ENCODE measurements at regions of chr2 and their contacts with region 1.

Region 1: DNA sequence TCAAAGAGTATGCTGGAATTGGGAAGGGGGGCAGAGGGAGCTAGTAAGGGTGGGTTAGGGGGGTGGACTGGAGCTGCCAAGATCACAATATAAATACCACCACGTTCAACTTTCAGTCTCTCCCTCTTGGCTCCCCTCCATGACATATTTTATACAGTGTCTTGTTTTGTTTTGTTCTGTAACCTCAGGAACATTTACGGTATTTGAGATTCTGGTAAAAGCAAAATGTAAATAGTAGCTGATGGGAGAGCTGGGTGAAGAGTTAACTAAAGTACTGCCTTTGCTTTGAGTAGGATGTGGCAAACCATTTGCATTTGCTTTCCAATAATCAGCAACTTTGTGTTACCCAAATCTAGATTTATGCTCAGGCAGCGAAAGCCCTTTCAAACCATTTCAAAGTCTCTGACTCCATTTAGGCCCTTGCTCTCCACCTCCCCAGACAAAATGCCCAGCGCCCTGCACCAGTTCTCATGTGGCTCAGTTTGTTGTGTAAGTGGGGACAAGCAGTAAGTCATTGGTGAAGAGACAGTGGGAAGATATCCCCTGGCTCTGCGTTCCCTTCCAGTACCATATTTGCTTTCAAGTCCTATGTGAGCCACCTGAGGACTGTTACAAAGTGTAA is 17.4 kb downstream of the IRS1 start:
- DNase-seq: no peak
- ATAC-seq: no peak

Region 2: DNA sequence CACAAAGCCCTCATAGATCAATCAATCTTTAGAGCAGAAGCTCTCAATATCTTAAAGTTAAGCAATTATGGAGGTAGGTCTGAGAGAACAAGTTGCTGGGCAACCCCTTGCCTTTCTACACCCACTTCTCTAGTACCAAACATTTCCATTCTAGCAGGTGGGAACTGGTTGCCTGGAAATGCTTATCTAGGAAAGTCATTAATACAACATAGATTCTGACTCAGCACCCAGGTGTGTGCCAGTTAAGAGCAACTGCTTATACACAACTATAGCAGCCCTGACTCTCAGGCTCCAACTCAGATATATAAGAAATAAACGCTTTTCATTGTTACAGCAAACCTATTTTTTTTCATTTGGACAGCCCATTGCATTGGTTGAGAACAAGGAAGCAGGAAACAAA is 220.2 kb before region 1 on chr2:
- intact Hi-C with region 1: no loop called
- DNase-seq: no peak
- ATAC-seq: no peak

Region 3: GRCh38 chr2:226649871-226650660 is 132.1 kb before region 1 on chr2:
- intact Hi-C with region 1: loop called in 1 of 2 experiments (anchors 10 kb)
- DNase-seq: peak; percentile 69 to 91
- ATAC-seq: peak; percentile 99

Region 4: GRCh38 chr2:228048838-228049490 is 1266.8 kb after region 1 on chr2:
- intact Hi-C with region 1: no loop called
- DNase-seq: peak in 1 of 2 donors; percentile 5
- ATAC-seq: peak; percentile 77

Measured in left colon (tissue), 2 donors.